ENCODE measurements at regions of chr1 and their contacts with region 1.

Region 1: DNA sequence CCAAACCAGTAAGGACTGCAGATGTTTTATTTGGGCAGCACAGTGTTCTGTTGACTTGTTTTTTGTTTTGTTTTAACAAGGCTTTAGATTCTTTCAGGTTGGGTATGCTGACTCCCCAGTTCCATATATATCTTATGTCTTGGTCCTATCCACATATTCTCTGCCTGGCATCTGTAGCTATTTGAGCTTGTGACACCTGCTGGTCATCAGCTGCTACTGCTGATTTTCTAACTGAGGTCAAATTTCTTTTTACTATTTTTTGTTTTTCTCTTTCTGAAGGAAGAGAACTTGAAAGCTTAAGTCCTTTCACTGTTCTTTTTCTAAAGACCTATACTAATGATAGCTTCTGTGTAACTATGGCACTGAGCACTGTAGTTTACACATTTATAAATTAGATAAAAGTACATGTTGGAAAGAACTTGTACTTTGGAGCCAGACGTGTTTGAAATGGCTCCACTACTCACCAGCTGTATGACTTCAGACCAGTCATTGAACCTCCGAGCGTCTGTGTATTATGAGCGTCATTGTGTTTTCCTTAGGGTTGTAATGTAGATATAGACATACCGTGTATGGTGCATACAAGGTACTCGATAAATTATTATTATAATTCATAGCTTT is 109.4 kb downstream of the NRDC start:
- DNase-seq: peak in 1 of 5 donors; percentile 24
- ATAC-seq: peak; percentile 63 to 83 (median 72)
- H3K4me3 ChIP-seq: no peak overlapping the region
- H3K27ac ChIP-seq: peak overlapping the region in 2 of 12 donors; percentile 1 to 18
- H3K4me1 ChIP-seq: peaks cover 0 to 12% (median 5%) of the 10 kb centered on the region in 12 donors
- H3K27me3 ChIP-seq: no peaks in the 10 kb centered on the region
- CTCF ChIP-seq: peak; percentile 73 to 92 (median 84)
- POLR2A ChIP-seq: no peak

Region 2: DNA sequence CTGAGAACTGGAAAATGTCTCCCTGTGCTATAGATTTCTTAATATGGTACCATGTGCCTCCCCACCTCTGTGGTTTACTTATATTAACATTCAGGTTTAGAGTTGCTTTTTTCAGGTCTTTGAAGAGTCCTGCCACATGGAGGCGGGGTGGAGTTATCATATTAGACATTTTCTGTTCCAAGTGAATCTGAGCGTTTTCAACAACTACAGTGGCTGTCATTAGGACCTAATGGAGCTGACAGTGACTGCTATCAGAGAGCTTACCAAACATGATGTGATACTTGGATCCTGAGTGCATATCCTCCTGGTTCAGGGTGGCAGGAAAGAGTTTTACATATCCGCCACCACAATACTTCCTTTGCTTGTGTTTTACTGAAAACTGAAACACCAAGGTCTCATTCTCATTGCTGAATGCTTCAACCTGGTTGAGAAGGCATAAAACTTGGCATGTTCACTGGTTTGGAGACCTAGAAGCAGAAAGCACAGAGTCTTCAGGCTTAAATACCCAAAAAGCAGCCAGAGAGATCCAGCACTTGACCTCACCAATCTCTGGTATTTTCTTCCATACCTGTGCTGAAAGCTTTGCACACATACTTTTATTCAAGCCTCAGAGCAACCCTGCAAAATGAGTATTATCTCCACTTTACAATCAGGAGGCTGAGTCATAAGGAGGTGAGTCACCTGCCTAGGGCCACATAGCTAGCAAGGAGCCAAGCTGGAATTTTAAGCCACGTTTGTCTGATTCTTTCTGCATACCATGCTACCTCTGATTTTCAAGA is 199.6 kb before region 1 on chr1:
- intact Hi-C with region 1: loop called in 3 of 10 experiments (anchors 10 kb)
- DNase-seq: no peak
- ATAC-seq: peak in 3 of 4 donors; percentile 17 to 51 (median 37)
- H3K4me3 ChIP-seq: no peak overlapping the region
- H3K27ac ChIP-seq: peak overlapping the region in 1 of 12 donors; percentile 53
- H3K4me1 ChIP-seq: peaks cover 5 to 44% (median 19%) of the 10 kb centered on the region in 12 donors
- H3K27me3 ChIP-seq: no peaks in the 10 kb centered on the region
- CTCF ChIP-seq: peak in 5 of 12 donors; percentile 13 to 37 (median 25)
- POLR2A ChIP-seq: no peak

Region 3: DNA sequence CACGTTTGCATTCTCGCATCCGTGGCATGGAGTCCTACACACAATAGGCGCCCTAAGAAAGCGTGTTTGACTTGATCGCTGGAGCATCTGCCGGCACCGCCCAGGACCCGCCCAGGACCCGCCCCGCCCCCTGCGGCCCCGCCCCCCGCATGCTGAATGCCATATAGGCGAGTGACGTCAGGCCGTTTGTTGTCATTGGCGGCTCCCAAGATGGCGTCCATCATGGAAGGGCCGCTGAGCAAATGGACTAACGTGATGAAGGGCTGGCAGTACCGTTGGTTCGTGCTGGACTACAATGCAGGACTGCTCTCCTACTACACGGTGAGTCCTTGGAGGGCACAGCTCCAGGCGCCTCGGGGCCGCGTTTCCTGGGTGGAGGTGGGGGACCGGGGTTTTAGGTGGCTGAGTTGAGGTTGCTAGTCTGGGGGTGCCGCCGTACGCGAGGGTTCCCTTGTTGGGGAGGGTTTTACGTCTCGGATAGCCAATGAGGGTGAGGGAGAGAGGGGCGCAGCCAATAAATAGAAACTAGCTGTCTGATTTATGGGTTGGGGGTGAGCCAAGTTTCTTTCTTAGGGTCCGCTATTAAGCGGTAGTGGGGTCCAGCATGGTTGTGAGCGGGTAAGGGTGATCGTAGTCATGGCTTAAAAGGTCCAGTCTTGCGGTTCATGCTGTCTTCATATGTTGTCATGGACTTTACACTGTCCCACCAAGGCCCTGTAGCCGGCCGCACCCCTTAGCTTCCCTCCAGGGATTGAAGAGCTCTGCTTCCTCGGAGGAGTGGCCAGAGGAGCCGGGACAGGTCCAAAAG is 152.0 kb before region 1 on chr1 and contains the start of gene OSBPL9:
- intact Hi-C with region 1: loop called in 2 of 10 experiments (anchors 5 kb)
- DNase-seq: peak; percentile 90 to 94 (median 92)
- ATAC-seq: peak; percentile 89 to 96 (median 95)
- H3K4me3 ChIP-seq: peak within 1 kb of the TSS; percentile 55 to 95 (median 84)
- H3K27ac ChIP-seq: peak within 1 kb of the TSS; percentile 51 to 93 (median 87)
- H3K4me1 ChIP-seq: peaks cover 8 to 60% (median 44%) of the 10 kb centered on the region in 12 donors
- H3K27me3 ChIP-seq: no peaks in the 10 kb centered on the region
- CTCF ChIP-seq: no peak
- POLR2A ChIP-seq: peak in 1 of 2 donors; percentile 75
- total RNA-seq, gene OSBPL9: 44.5 to 69.5 (median 53.5) TPM

Region 4: DNA sequence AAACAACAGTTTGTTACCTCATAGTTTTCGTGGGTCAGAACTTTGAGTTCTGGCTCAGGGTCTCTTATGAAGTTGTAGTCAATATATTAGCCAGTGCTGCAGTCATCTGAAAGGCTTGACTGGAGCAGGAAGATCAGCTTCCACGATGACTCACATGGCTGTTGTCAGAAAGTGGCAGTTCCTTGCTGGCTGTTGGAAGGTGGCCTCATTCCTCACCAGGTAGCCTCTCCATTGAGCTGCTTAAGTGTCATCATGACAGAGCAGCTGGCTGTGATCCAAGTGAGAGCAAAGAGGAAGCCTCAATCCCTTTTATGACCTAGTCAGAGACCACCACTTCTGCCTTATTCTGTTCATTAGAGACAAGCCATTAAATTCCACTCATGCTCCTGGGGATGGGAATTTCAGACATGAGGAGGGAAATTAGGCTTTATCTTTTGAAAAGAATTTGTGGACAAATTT is 146.6 kb before region 1 on chr1:
- intact Hi-C with region 1: loop called in 7 of 10 experiments (anchors 2 to 5 kb)
- DNase-seq: peak in 3 of 5 donors; percentile 42 to 57 (median 46)
- ATAC-seq: peak; percentile 31 to 68 (median 53)
- H3K4me3 ChIP-seq: no peak overlapping the region
- H3K27ac ChIP-seq: peak overlapping the region in 8 of 12 donors; percentile 11 to 62 (median 41)
- H3K4me1 ChIP-seq: peaks cover 8 to 87% (median 58%) of the 10 kb centered on the region in 12 donors
- H3K27me3 ChIP-seq: no peaks in the 10 kb centered on the region
- CTCF ChIP-seq: no peak
- POLR2A ChIP-seq: no peak

Region 5: GRCh38 chr1:51627678-51628077 is 141.4 kb before region 1 on chr1:
- intact Hi-C with region 1: loop called in 8 of 10 experiments (anchors 2 to 10 kb)
- DNase-seq: no peak
- ATAC-seq: peak in 2 of 4 donors; percentile 54 to 60
- H3K4me3 ChIP-seq: no peak overlapping the region
- H3K27ac ChIP-seq: no peak overlapping the region
- H3K4me1 ChIP-seq: peaks cover 0 to 56% (median 23%) of the 10 kb centered on the region in 12 donors
- H3K27me3 ChIP-seq: no peaks in the 10 kb centered on the region
- CTCF ChIP-seq: peak in 10 of 12 donors; percentile 23 to 57 (median 38)
- POLR2A ChIP-seq: no peak

Region 6: GRCh38 chr1:51636764-51637522 is 132.1 kb before region 1 on chr1:
- intact Hi-C with region 1: loop called in 3 of 10 experiments (anchors 5 to 10 kb)
- DNase-seq: peak in 2 of 5 donors; percentile 33 to 72
- ATAC-seq: peak; percentile 18 to 76 (median 65)
- H3K4me3 ChIP-seq: no peak overlapping the region
- H3K27ac ChIP-seq: peak overlapping the region in 8 of 12 donors; percentile 5 to 48 (median 34)
- H3K4me1 ChIP-seq: peaks cover 0 to 36% (median 19%) of the 10 kb centered on the region in 12 donors
- H3K27me3 ChIP-seq: no peaks in the 10 kb centered on the region
- CTCF ChIP-seq: no peak
- POLR2A ChIP-seq: no peak

Region 7: GRCh38 chr1:51829058-51829457 is 60.0 kb after region 1 on chr1:
- intact Hi-C with region 1: no loop called
- DNase-seq: no peak
- ATAC-seq: no peak
- H3K4me3 ChIP-seq: no peak overlapping the region
- H3K27ac ChIP-seq: no peak overlapping the region
- H3K4me1 ChIP-seq: no peaks in the 10 kb centered on the region
- H3K27me3 ChIP-seq: no peaks in the 10 kb centered on the region
- CTCF ChIP-seq: no peak
- POLR2A ChIP-seq: no peak